OCI-LY7 (cell line): ENCODE measurements at regions of chr9 and their contacts with region 1.

Region 1: GRCh38 chr9:131733541-131734061 is 6.3 kb downstream of the RAPGEF1 start:
- DNase-seq: no peak
- H3K4me3 ChIP-seq: peak overlapping the region; percentile 81
- H3K27ac ChIP-seq: peak overlapping the region; percentile 100
- H3K4me1 ChIP-seq: peaks cover 88% of the 10 kb centered on the region
- CTCF ChIP-seq: no peak

Region 2: DNA sequence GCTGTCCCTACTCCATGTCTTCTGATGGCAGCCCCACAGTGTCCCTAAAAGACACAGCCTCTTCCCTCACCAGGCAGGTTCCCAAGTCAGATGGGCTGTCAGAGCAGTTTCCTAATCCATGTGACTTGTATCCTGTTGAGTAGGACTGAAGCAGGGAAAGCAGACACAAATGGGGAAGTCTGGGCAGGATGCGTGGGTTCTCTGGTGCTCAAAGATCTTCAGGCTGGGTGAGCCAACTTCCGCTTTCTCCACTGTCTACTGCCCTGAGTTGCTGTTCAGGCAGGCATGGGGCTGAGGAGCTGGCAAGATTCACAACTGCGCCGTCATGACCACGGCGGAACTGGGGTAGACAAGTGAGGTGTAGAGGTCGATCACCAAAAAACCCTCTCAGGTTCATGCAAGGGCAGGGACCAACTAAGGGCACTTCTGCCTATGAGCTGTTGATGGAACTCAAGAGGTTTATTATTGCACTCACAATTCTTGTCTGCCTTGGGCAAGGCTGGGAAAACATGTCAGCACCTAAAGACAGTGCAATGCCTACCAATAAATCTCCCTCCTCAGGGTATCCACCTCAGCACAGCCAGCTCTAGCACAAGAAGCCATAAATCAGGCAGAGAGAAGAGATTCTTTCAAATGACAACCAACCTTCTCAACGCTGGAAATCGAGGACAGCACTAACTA is 77.1 kb before region 1 on chr9:
- CTCF ChIA-PET with region 1: no interaction called
- POLR2A ChIA-PET with region 1: interaction called, 5 read pairs
- intact Hi-C with region 1: loop called (anchors 1 kb)
- DNase-seq: peak; percentile 93
- H3K4me3 ChIP-seq: peak overlapping the region; percentile 51
- H3K27ac ChIP-seq: peak overlapping the region; percentile 95
- H3K4me1 ChIP-seq: peaks cover 100% of the 10 kb centered on the region
- CTCF ChIP-seq: no peak

Region 3: DNA sequence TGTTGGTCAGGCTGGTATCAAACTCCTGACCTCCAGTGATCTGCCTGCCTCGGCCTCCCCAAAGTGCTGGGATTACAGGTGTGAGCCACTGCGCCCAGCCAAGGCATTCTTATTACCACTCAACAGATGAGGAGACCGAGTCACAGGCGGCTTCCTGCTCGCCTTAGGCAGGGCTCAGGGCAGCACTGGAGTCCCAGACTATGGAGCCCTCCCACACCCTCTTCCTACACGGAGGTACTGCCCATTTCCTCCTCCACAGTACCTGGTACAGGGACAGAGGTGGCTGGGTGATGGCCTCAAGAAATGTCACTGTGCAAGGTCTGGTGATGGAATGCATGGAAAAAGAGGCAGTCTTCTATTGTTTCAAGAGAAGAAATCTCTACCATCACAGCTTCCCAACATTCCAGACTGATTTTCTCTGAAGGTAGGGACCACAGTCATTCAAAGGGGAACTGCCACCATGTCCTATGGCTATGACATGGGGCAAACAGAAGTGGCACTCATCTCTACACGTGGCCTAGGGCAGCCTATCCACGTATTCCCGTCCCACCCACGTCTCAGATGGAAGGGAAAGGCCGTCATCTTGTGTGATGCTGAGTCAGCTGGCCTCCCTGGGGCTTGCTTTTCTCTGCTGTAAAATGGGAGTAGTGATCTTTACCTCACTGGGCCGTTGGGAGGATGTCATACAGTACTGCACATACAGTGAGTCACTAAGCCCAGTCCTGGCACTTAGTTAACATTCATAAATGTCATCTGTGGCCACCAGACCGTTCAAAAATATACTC is 66.2 kb before region 1 on chr9:
- CTCF ChIA-PET with region 1: no interaction called
- POLR2A ChIA-PET with region 1: interaction called, 347 read pairs
- intact Hi-C with region 1: no loop called
- DNase-seq: no peak
- H3K4me3 ChIP-seq: peak overlapping the region; percentile 76
- H3K27ac ChIP-seq: peak overlapping the region; percentile 98
- H3K4me1 ChIP-seq: peaks cover 99% of the 10 kb centered on the region
- CTCF ChIP-seq: no peak

Region 4: DNA sequence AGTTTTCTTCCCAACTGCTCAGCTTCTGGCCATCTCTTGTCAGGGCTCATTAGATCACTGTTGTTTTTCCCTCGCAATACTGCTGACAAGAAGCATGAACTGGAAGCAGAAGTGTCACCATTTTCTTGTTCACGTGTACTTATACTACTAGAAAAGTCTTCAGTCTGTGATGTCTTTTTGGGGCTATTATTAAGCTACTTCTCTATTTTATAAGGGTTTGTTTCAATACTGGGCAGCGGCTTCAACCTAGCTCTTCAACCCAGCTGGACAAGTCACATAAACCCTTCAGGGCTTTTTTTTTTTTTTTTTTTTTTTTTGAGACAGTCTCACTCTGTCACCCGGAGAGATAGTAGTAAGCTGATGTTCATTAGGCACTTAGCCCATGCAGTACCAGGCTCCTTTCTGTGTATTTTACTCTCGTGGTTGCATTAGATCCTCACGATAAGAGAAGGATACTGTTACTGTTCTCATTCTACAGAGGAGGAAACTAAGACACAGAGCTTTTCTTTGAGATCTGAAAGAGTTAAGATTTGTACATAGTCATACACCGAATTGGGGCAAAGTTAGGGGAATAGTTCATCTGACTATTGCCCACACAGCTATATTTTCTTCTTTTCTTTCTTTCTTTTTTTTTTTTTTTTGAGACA is 14.2 kb before region 1 on chr9:
- CTCF ChIA-PET with region 1: interaction called, 6 read pairs
- POLR2A ChIA-PET with region 1: interaction called, 19 read pairs
- intact Hi-C with region 1: loop called (anchors 2 kb)
- DNase-seq: no peak
- H3K4me3 ChIP-seq: no peak overlapping the region
- H3K27ac ChIP-seq: peak overlapping the region; percentile 39
- H3K4me1 ChIP-seq: peaks cover 56% of the 10 kb centered on the region
- CTCF ChIP-seq: no peak

Region 5: DNA sequence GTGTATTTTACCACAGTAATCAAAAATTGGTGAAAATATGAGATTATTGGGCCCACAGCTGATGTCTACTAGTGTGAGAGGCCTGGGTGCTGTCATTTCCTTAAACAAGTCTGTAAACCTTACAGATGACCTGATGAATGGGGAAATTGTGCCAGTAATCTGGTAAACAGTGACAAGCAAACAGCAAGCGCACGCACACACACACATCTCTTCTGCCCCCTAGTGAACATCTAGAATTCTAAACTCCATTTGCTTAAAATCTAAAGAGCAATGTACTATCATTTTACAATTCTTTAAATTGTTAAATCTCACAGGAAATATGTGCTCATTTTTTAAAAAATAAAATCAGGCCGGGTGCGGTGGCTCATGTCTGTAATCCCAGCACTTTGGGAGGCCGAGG is 13.8 kb after region 1 on chr9:
- CTCF ChIA-PET with region 1: interaction called, 7 read pairs
- POLR2A ChIA-PET with region 1: interaction called, 20 read pairs
- intact Hi-C with region 1: no loop called
- DNase-seq: peak; percentile 82
- H3K4me3 ChIP-seq: no peak overlapping the region
- H3K27ac ChIP-seq: peak overlapping the region; percentile 96
- H3K4me1 ChIP-seq: peaks cover 96% of the 10 kb centered on the region
- CTCF ChIP-seq: peak; percentile 84